Left colon (tissue), 2 donors: ENCODE measurements at regions of chr13 and their contacts with region 1.

Region 1: GRCh38 chr13:48303359-48304142 is at the start of gene RB1:
- DNase-seq: peak; percentile 91 to 96
- ATAC-seq: peak; percentile 94
- total RNA-seq, gene RB1: 23.0 to 26.3 TPM

Region 2: GRCh38 chr13:48126944-48127830 is 176.4 kb before region 1 on chr13:
- intact Hi-C with region 1: loop called in 1 of 2 experiments (anchors 10 kb)
- DNase-seq: peak; percentile 22 to 50
- ATAC-seq: peak; percentile 79

Region 3: DNA sequence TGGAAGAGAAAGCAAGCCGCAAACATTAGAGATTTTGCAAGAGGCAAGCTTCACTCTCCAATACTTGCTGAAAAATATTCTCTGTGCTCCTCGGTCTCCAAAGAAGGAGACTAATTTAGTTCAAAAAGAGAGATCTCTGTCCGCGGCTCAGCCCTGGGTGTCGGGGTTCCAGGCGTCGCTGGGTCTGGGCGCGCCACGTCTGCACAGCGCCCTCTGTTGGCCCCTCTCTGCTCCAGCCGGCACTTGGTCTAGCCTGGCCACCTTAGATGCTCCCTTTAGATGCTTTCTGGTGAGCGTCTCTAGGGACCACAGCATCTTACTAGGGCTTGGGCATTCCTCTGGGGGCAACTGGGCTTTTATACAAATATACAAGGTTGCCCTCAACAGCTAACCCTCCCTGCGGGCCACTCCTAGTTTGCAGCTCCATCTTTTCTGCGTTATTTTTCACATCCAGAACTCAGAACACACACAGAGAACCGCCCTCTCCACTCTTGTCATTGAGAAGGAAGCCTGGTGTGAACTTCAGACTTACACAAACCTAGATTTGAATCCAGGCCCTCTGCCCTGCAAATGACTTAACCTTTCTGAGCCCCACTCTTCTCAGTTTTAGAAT is 428.5 kb after region 1 on chr13:
- intact Hi-C with region 1: no loop called
- DNase-seq: peak in 1 of 2 donors; percentile 70
- ATAC-seq: peak; percentile 78